ENCODE measurements at regions of chr19 and their contacts with region 1.

Region 1: DNA sequence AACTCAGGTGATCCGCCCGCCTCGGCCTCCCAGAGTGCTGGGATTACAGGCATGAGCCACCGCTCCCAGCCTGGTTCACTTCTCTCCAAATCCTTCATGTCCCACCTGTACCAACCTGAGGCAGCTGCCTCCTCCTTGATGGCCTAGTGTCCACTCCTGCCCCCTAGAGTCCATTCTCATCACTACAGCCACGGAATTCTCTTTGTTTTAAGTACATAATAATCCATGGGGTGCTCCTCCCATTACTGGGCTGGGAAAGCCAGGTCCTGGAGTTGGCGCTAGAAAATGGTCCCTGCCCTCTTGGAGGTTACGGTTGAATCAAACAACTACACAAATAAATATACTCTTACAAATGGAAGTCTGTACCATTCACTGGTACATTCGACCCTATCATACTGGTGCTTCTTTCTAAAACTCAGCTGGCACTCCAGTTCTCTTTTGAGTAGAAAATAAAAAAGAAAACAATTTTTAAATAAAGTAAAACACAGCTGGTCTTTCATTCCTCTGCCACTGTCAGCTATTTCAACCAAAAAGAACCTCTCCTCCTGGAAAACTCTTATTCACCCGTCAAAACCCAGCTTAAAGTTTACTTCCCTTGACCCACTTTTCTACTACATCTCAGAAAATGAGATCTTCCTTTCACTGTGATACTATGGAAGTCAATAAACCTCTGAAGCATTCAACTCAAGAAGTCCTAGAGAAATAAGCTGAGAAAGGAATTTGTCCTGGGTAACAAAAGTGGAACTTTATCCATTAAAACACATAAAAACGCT is 22.4 kb upstream of the ARHGEF18 start:
- DNase-seq: peak in 4 of 9 experiments; percentile 23 to 66 (median 50)
- ATAC-seq: no peak
- H3K4me3 ChIP-seq: no peak overlapping the region
- H3K4me3 Mint-ChIP-seq: no peak overlapping the region
- H3K27ac ChIP-seq: no peak overlapping the region
- H3K27ac Mint-ChIP-seq: no peak overlapping the region
- H3K4me1 ChIP-seq: no peaks in the 10 kb centered on the region
- H3K4me1 Mint-ChIP-seq: no peaks in the 10 kb centered on the region
- H3K27me3 ChIP-seq: no peaks in the 10 kb centered on the region
- H3K27me3 Mint-ChIP-seq: no peaks in the 10 kb centered on the region
- CTCF ChIP-seq: peak; percentile 38

Region 2: DNA sequence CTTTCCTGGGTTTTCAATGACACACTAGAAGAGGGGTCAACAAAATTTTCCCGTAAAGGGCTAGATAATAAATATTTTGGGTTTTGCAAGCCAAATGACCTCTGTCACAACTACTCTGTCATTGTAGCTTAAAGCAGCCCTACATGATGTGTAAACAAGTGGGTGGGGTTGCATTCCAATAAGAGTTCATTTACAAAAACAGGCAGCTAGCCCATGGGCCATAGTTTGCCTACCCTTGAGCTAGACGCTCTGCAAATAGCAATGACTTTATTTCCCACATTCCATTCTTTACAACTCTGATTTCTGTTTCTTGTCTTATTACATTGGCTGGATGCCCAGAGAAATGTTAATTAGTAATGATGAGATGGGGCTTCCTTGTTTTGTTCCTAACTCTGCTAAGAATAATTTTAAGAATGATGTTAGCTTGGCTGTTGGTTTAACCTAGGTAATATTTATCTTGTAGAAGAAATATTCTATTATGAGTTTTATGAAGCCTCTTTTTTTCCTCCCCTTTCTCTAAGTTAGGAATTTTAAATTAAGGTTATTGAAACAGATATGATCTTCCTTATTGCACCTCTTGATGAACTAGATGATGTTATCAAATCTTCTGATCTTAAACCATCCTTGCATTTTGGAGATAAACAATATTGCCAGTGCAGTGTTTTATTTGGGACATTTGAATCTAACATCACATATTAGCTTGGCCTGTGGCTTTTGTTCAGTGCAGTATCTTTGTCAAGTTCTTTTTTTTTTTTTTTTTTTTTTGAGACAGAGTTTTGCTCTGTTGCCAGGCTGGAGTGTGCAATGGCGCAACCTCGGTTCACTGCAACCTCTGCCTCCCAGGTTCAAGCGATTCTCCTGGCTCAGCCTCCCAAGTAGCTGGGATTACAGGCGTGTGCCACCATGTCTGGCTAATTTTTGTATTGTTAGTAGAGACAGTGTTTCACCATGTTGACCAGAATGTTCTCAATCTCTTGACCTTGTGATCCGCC is 180.5 kb before region 1 on chr19:
- CTCF ChIA-PET with region 1: interaction called, 16 read pairs
- POLR2A ChIA-PET with region 1: no interaction called
- intact Hi-C with region 1: loop called in 1 of 2 experiments (anchors 5 kb)
- DNase-seq: no peak
- ATAC-seq: no peak
- H3K4me3 ChIP-seq: no peak overlapping the region
- H3K4me3 Mint-ChIP-seq: no peak overlapping the region
- H3K27ac ChIP-seq: no peak overlapping the region
- H3K27ac Mint-ChIP-seq: no peak overlapping the region
- H3K4me1 ChIP-seq: no peaks in the 10 kb centered on the region
- H3K4me1 Mint-ChIP-seq: peaks cover 3% of the 10 kb centered on the region
- H3K27me3 ChIP-seq: no peaks in the 10 kb centered on the region
- H3K27me3 Mint-ChIP-seq: no peaks in the 10 kb centered on the region
- CTCF ChIP-seq: no peak

Region 3: DNA sequence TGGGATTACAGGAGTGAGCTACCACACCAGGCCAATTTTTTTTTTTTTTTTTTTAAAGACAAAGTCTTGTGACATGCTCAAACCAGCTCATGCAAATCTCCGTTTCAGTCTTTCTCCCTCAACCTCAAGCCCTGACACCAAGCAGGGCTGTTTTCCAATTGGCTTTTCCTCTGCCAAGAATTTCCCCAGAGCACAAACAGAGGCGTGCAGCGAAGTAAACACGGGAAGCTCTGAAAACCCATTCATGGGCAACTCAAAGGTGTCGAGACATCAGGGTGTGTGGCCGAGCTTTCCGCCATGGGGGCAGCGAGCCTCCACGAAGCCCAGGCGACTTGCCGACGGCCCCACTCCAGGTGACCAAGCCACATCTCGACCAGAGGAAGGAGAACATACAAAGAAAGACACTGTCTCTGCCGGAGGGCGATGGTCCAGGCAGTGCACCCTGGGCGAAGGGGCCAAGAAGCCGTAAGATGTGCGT is 102.0 kb before region 1 on chr19:
- CTCF ChIA-PET with region 1: no interaction called
- POLR2A ChIA-PET with region 1: no interaction called
- intact Hi-C with region 1: loop called in 1 of 2 experiments (anchors 10 kb)
- DNase-seq: no peak
- ATAC-seq: no peak
- H3K4me3 ChIP-seq: no peak overlapping the region
- H3K4me3 Mint-ChIP-seq: no peak overlapping the region
- H3K27ac ChIP-seq: no peak overlapping the region
- H3K27ac Mint-ChIP-seq: no peak overlapping the region
- H3K4me1 ChIP-seq: no peaks in the 10 kb centered on the region
- H3K4me1 Mint-ChIP-seq: peaks cover 8% of the 10 kb centered on the region
- H3K27me3 ChIP-seq: peaks cover 0 to 2% of the 10 kb centered on the region in 2 experiments
- H3K27me3 Mint-ChIP-seq: peaks cover 8% of the 10 kb centered on the region
- CTCF ChIP-seq: no peak

Region 4: DNA sequence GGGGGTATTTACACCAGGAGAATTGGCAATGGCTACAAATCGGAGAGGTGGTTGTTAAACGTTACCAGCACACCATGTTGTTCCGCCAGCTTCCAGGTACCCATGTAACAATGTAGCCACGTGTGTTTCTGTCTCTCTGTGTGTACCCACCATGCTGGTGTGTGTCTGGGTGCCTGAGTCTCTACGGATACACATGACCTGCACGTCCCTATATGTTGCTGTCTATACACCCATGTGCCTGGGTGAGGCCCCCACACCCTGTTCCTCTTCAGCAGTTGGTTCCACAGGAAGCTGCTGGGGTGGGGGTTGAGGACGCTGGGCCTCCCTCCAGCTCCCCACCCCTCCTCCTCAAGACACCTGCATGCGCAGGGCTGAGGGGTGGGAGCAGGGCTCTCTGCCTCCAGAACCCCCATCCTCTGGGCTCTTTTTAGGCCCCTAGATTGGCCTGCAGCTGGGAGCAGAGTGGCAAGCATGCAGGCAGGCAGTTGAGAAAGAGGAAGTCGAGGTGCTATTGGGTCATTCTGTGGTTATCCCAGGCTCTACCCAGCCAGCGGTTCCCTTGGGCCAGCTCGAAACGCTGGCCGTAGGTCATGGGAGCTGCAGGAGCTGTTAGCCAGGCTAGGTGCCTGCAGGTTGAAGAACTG is 22.4 kb after region 1 on chr19 and contains the start of gene ARHGEF18:
- CTCF ChIA-PET with region 1: interaction called, 17 read pairs
- POLR2A ChIA-PET with region 1: interaction called, 3 read pairs
- intact Hi-C with region 1: no loop called
- DNase-seq: peak; percentile 14 to 85 (median 68)
- ATAC-seq: peak; percentile 68
- H3K4me3 ChIP-seq: peak within 1 kb of the TSS; percentile 92 to 96
- H3K4me3 Mint-ChIP-seq: peak within 1 kb of the TSS; percentile 90
- H3K27ac ChIP-seq: peak within 1 kb of the TSS; percentile 74 to 83
- H3K27ac Mint-ChIP-seq: peak within 1 kb of the TSS; percentile 96
- H3K4me1 ChIP-seq: peaks cover 62% of the 10 kb centered on the region
- H3K4me1 Mint-ChIP-seq: peaks cover 70% of the 10 kb centered on the region
- H3K27me3 ChIP-seq: no peaks in the 10 kb centered on the region
- H3K27me3 Mint-ChIP-seq: no peaks in the 10 kb centered on the region
- CTCF ChIP-seq: no peak
- total RNA-seq, gene ARHGEF18: 78.8 to 81.0 TPM

Region 5: DNA sequence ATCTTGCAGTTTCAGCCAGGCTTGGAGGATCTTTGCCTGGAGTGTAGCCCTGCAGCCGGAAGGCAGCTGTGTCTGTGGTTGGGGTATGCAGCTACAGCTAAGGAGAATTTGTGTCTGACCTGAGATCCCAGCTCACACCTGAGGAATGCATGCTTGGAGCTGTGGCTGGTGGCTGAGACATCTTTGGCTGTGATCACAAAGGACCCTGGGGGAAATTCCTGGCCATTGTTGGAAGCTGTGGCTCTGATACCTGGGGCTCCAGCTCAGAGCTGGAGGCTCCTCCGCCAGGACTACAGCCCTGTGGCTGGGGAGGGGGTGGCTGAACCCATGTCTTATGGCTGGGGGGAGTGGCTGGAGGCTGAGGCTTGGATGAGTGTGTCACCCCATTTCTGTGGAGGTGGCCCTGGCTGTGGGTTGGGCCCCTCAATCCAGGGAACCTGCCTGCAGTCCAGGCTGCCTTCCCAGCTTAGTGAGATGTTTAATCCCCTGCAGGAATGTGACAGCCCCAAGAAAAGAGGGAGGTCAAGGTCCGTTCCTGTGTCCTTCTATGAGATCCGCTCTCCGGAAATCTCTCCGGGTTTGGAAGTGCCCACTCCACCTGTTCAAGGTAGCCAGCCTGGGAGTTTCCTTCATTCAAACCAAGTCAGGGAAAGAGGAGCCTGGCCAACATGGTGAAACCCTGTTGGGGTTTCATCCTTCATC is 50.0 kb after region 1 on chr19:
- CTCF ChIA-PET with region 1: interaction called, 11 read pairs
- POLR2A ChIA-PET with region 1: interaction called, 3 read pairs
- intact Hi-C with region 1: loop called in 1 of 2 experiments (anchors 1 kb)
- DNase-seq: no peak
- ATAC-seq: no peak
- H3K4me3 ChIP-seq: no peak overlapping the region
- H3K4me3 Mint-ChIP-seq: no peak overlapping the region
- H3K27ac ChIP-seq: no peak overlapping the region
- H3K27ac Mint-ChIP-seq: peak overlapping the region; percentile 18
- H3K4me1 ChIP-seq: no peaks in the 10 kb centered on the region
- H3K4me1 Mint-ChIP-seq: peaks cover 10% of the 10 kb centered on the region
- H3K27me3 ChIP-seq: no peaks in the 10 kb centered on the region
- H3K27me3 Mint-ChIP-seq: no peaks in the 10 kb centered on the region
- CTCF ChIP-seq: no peak

Measured in CD8-positive, alpha-beta T cell (primary cell).